Heart left ventricle (tissue), 16 donors: ENCODE measurements at regions of chr14 and their contacts with region 1.

Region 1: DNA sequence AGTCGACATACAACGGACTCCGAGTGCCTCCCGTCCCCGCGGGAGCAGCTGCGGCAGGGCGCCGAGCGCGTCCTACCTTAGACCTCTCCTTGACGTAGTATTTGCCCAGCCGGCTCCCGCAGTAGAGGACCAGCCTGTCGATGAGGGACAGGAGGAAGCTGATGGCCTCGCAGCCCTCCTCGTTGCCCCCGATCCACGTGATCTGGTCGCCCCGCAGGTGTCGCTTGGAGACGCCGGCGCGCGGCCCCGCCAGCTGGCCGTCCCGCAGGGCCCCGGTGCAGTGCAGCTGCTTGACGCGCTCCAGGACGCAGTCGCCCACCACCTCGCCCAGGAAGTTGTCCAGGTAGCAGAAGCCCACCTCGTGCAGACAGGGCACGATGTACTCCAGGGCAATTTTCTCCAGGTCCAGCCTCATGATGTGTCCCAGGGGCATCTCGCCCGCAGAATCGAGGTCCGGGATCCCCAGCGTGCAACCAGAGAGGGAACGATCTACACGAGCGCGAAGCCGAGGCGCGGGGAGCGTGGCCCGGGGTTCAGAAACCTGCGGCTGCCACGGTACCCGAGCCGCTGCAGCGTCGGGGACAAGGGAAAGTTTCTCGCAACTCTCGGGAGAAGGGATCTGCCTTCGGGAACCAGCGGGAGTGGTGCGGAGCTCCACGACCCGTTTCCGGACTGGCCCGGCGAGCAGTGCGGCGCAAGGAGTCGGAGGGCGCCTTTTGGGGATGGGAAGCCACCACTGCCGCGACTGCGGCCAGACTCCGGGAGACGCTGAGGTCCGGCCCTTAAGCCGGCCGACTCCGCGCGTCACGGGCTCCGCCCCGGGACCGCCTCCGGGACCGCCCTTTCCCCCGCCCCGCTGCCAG is at the start of gene EGLN3:
- DNase-seq: peak; percentile 92 to 94 (median 93)
- ATAC-seq: peak; percentile 97 to 99 (median 98)
- H3K4me3 ChIP-seq: peak within 1 kb of the TSS; percentile 49 to 87 (median 70)
- H3K27ac ChIP-seq: peak within 1 kb of the TSS; percentile 13 to 91 (median 80)
- H3K4me1 ChIP-seq: peaks cover 0 to 49% (median 16%) of the 10 kb centered on the region in 12 donors
- H3K27me3 ChIP-seq: peaks cover 0 to 23% (median 0%) of the 10 kb centered on the region in 9 donors
- CTCF ChIP-seq: no peak
- POLR2A ChIP-seq: peak; percentile 99 to 100
- total RNA-seq, gene EGLN3: 46.5 to 221 (median 138) TPM

Region 2: GRCh38 chr14:33839193-33840076 is 111.1 kb before region 1 on chr14:
- intact Hi-C with region 1: loop called in 2 of 10 experiments (anchors 10 kb)
- DNase-seq: peak in 4 of 5 donors; percentile 37 to 53 (median 47)
- ATAC-seq: peak; percentile 65 to 81 (median 74)
- H3K4me3 ChIP-seq: no peak overlapping the region
- H3K27ac ChIP-seq: no peak overlapping the region
- H3K4me1 ChIP-seq: peaks cover 0 to 19% (median 2%) of the 10 kb centered on the region in 12 donors
- H3K27me3 ChIP-seq: no peaks in the 10 kb centered on the region
- CTCF ChIP-seq: peak; percentile 77 to 95 (median 86)
- POLR2A ChIP-seq: no peak

Region 3: GRCh38 chr14:33938131-33938949 is 12.2 kb before region 1 on chr14:
- intact Hi-C with region 1: loop called in 1 of 10 experiments (anchors 1 kb)
- DNase-seq: peak; percentile 80 to 89 (median 88)
- ATAC-seq: peak; percentile 94 to 97 (median 96)
- H3K4me3 ChIP-seq: peak overlapping the region in 9 of 12 donors; percentile 6 to 41 (median 27)
- H3K27ac ChIP-seq: peak overlapping the region; percentile 57 to 88 (median 80)
- H3K4me1 ChIP-seq: peaks cover 0 to 80% (median 46%) of the 10 kb centered on the region in 12 donors
- H3K27me3 ChIP-seq: no peaks in the 10 kb centered on the region
- CTCF ChIP-seq: no peak
- POLR2A ChIP-seq: no peak

Region 4: GRCh38 chr14:34051966-34052657 is 101.6 kb after region 1 on chr14:
- intact Hi-C with region 1: loop called in 3 of 10 experiments (anchors 5 to 10 kb)
- DNase-seq: no peak
- ATAC-seq: peak in 3 of 4 donors; percentile 41 to 63 (median 61)
- H3K4me3 ChIP-seq: no peak overlapping the region
- H3K27ac ChIP-seq: peak overlapping the region in 2 of 12 donors; percentile 18 to 54
- H3K4me1 ChIP-seq: peaks cover 0 to 42% (median 16%) of the 10 kb centered on the region in 12 donors
- H3K27me3 ChIP-seq: no peaks in the 10 kb centered on the region
- CTCF ChIP-seq: no peak
- POLR2A ChIP-seq: no peak

Region 5: DNA sequence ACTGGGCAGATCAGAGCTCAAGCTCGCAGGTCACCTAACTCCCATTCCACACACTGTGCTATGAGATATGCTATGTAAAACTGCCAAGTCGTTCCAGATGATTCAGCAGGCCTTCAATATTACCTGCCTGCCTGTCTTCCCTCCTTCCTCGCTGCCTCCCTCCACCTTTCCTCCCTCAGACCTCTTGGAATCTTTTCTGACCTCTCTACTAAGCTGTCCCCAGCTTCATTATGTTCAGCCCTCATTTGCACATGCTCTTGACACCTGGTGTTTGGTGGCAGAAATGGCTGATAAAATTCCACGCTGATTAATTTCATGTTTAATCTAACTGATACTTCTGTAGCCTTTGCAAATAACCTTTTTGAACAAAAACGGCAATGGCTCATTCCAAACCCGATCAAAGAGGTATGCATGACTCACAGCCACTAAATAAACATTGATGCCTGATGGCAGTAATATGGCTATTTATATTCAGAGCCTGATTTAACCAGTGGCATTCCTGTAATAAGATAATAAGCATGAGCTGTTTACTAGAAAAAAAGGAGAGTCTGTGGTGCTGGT is 131.1 kb after region 1 on chr14:
- intact Hi-C with region 1: loop called in 1 of 10 experiments (anchors 1 kb)
- DNase-seq: no peak
- ATAC-seq: peak; percentile 67 to 81 (median 80)
- H3K4me3 ChIP-seq: no peak overlapping the region
- H3K27ac ChIP-seq: peak overlapping the region; percentile 77 to 100 (median 92)
- H3K4me1 ChIP-seq: peaks cover 0 to 44% (median 11%) of the 10 kb centered on the region in 12 donors
- H3K27me3 ChIP-seq: no peaks in the 10 kb centered on the region
- CTCF ChIP-seq: no peak
- POLR2A ChIP-seq: no peak